ENCODE measurements at regions of chr12 and their contacts with region 1.

Region 1: DNA sequence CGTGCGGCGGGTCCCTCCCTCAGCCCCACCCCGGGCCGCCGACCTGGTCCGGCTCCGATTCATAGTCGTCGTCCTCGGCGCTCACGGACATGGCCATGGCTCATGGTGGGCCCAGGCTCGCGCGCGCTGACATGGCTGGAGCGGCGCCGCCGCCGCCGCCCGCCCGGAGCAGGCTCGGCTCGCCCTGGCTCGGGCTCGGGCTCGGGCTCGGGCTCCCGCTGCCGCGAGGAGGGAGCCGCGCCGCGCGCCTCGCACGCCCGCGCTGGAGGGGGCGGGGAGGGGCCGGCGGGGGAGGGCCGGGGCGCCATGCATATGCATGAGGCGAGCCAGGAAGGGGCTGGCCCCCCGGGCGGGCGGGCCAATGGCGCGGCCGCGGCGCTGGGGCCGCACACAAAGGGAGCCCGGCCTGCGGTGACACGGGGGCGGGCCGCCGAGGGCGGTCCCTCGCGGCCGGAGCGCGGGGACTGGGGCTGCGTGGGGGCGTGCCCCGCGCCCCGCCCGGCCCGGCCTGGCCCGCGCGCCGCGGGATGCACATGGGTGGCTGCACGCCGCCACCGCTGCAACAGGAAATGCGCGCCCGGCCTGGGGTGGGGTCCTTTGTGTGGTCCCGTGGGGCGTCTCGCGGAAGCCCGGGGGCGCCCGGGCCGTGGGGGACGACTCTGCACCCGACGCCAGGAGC is 67.3 kb downstream of the RNF34 start:
- DNase-seq: peak; percentile 77 to 94 (median 86)
- ATAC-seq: peak; percentile 85
- H3K4me3 ChIP-seq: peak overlapping the region; percentile 49 to 55
- H3K4me3 Mint-ChIP-seq: peak overlapping the region; percentile 68
- H3K27ac ChIP-seq: peak overlapping the region; percentile 44 to 59
- H3K27ac Mint-ChIP-seq: no peak overlapping the region
- H3K4me1 ChIP-seq: peaks cover 26% of the 10 kb centered on the region
- H3K4me1 Mint-ChIP-seq: peaks cover 37% of the 10 kb centered on the region
- H3K27me3 ChIP-seq: no peaks in the 10 kb centered on the region
- H3K27me3 Mint-ChIP-seq: no peaks in the 10 kb centered on the region
- CTCF ChIP-seq: no peak

Region 2: DNA sequence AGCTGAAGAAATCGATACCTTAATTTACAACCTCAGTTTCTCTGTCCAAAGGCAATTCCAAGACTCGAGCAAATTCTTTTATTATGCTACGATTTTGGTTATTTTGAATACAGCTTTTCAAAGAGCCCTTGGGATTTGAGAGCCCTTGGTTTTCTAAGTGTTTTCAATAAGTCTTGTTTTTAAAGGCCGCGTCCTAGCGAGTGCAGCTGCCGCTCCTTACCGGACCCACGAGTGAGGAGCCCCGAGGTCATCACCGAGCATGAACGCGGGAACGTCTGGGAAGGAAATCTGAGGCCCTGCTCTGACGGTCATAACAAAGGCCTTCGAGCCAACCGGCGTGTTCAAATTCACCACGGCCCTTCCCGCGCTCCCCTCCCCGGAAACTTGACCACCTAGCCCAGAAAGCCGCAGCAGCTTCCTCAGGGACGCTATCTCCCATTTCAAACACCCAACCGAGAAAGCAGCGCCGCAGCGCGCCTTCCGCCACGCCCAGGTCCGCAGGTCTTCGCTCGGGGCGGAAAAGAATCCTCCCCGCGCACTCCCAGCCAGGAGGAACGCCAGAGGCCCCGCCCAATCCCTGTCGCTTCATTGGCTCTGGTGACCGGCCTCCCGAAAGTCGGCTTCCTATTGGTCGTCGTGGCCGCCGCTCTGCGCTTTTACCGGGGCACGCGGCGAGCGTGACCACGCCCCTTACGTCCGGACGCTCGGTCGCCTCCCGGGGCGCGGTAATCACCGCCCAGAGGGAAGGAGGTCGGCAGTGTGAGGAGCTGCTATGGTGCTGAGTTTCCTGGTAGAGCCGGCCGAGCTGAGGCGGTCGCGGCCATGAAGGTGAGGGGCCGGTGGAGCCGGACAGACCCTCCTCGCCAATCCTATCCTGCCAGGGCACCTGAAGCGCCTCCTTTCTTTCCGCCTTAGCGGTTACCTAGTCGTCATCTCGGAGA is 67.6 kb before region 1 on chr12 and contains the start of gene RNF34:
- CTCF ChIA-PET with region 1: no interaction called
- POLR2A ChIA-PET with region 1: interaction called, 9 read pairs
- intact Hi-C with region 1: loop called (anchors 1 kb)
- DNase-seq: peak; percentile 95 to 99 (median 97)
- ATAC-seq: peak; percentile 87
- H3K4me3 ChIP-seq: peak within 1 kb of the TSS; percentile 78 to 89
- H3K4me3 Mint-ChIP-seq: peak within 1 kb of the TSS; percentile 86
- H3K27ac ChIP-seq: peak within 1 kb of the TSS; percentile 78 to 90
- H3K27ac Mint-ChIP-seq: peak within 1 kb of the TSS; percentile 97
- H3K4me1 ChIP-seq: peaks cover 28% of the 10 kb centered on the region
- H3K4me1 Mint-ChIP-seq: peaks cover 33% of the 10 kb centered on the region
- H3K27me3 ChIP-seq: no peaks in the 10 kb centered on the region
- H3K27me3 Mint-ChIP-seq: no peaks in the 10 kb centered on the region
- CTCF ChIP-seq: no peak
- total RNA-seq, gene RNF34: 46.8 to 51.3 TPM

Region 3: GRCh38 chr12:121530600-121531355 is 63.5 kb after region 1 on chr12:
- CTCF ChIA-PET with region 1: no interaction called
- POLR2A ChIA-PET with region 1: no interaction called
- intact Hi-C with region 1: loop called in 1 of 2 experiments (anchors 2 kb)
- DNase-seq: peak; percentile 45 to 92 (median 79)
- ATAC-seq: peak; percentile 65
- H3K4me3 ChIP-seq: peak overlapping the region in 1 of 2 experiments; percentile 30
- H3K4me3 Mint-ChIP-seq: peak overlapping the region; percentile 63
- H3K27ac ChIP-seq: peak overlapping the region; percentile 47 to 84
- H3K27ac Mint-ChIP-seq: peak overlapping the region; percentile 94
- H3K4me1 ChIP-seq: peaks cover 38% of the 10 kb centered on the region
- H3K4me1 Mint-ChIP-seq: peaks cover 49% of the 10 kb centered on the region
- H3K27me3 ChIP-seq: no peaks in the 10 kb centered on the region
- H3K27me3 Mint-ChIP-seq: no peaks in the 10 kb centered on the region
- CTCF ChIP-seq: no peak

Region 4: DNA sequence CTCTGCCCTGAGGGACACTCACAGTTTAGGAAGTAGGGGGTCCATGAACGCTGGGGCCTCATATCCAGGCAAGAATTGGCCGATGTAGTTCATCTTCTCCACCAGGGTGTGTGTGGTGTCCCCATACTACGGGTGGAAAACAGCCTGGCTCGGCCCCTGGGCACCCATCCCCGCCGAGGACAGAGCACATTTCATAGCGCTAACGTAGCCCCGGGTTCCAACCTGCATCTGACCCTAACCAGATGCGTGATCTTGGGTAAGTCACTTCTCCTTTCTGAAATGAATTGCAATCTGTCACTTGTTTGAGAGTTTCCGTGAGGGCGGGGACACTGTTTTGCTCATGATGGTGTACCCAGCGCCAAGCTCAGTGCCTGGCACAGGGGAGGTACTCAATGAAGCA is 382.4 kb after region 1 on chr12:
- CTCF ChIA-PET with region 1: no interaction called
- POLR2A ChIA-PET with region 1: no interaction called
- intact Hi-C with region 1: no loop called
- DNase-seq: no peak
- ATAC-seq: no peak
- H3K4me3 ChIP-seq: no peak overlapping the region
- H3K4me3 Mint-ChIP-seq: no peak overlapping the region
- H3K27ac ChIP-seq: no peak overlapping the region
- H3K27ac Mint-ChIP-seq: no peak overlapping the region
- H3K4me1 ChIP-seq: no peaks in the 10 kb centered on the region
- H3K4me1 Mint-ChIP-seq: no peaks in the 10 kb centered on the region
- H3K27me3 ChIP-seq: no peaks in the 10 kb centered on the region
- H3K27me3 Mint-ChIP-seq: no peaks in the 10 kb centered on the region
- CTCF ChIP-seq: no peak

Measured in CD8-positive, alpha-beta T cell (primary cell).